ENCODE measurements at regions of chr15 and their contacts with region 1.

Region 1: DNA sequence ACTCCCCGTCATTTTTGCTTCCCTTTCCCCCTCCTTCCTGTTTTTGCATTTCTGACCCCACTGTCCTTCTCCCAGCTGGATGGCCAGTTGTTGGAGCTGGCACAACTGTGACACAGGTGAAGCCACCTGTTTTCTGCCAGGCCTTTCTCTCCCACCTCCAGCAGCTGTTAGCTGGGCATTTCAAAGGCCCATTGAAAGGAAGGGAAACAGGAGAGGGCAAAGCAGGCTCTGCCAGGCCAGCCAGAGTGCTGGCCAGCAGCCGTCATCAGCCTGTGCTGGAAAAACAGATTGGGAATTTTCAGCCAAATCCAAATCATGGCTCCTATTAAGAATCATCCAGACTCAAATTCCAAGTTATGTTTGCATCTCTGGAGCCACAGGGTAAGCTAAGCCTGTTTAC is 155.2 kb upstream of the C2CD4B start:
- DNase-seq: no peak
- H3K4me3 Mint-ChIP-seq: no peak overlapping the region
- H3K27ac Mint-ChIP-seq: no peak overlapping the region
- H3K4me1 Mint-ChIP-seq: no peaks in the 10 kb centered on the region
- H3K27me3 Mint-ChIP-seq: no peaks in the 10 kb centered on the region
- CTCF ChIP-seq: no peak

Region 2: GRCh38 chr15:61780278-61780980 is 539.8 kb before region 1 on chr15:
- CTCF ChIA-PET with region 1: interaction called, 15 read pairs
- intact Hi-C with region 1: no loop called
- DNase-seq: no peak
- H3K4me3 Mint-ChIP-seq: no peak overlapping the region
- H3K27ac Mint-ChIP-seq: no peak overlapping the region
- H3K4me1 Mint-ChIP-seq: no peaks in the 10 kb centered on the region
- H3K27me3 Mint-ChIP-seq: peaks cover 72% of the 10 kb centered on the region
- CTCF ChIP-seq: no peak

Measured in Calu3 (cell line).